ENCODE measurements at regions of chr2 and their contacts with region 1.

Region 1: DNA sequence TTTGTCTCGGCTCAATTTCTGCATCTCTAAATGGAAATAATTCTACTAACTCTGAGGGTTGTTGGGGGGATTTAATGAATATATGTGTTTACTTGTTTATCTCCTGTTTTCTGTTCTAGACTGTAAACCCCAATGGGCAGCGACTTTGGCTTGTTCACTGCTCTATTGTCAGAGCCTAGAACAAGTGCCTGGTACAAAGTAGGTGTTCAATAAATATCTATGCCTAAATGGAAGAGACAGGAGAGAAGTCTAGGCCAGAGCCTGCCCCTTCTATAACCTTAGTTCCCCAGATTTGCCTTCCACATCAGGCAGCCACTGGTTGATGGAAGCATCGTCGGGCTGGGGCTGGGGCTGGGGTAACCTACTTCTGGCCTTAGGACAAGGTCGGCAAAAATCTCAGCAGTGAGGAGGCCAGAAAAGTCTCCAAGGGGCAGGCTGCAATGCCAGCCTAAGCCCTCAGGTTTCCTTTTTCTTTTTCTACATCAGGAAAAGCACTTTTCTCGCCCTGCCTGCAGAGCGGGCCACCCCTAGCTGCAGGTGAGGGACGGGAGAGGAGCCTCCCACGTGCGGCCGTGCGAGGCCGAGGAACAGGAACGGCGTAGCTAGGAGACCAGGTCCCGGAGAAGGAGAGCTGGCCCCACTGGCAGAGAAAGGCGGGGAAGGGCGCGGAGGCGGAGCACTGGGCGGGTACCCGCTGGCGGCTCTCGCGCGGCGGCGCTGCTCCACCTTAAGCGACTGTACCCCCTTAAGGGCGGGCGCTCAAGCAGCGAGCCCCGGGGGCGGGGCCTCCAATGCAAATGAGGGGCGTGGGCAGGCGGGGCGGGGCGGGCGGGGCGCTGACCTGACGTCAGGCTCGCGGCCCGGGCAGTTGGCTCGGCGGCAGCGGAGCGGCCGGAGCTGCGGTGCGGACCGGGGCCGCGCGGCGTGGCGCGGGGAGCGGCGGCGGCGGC is at the start of gene CNNM4:
- DNase-seq: peak; percentile 82 to 95 (median 91)
- ATAC-seq: peak; percentile 96
- H3K4me3 ChIP-seq: peak within 1 kb of the TSS; percentile 83
- H3K4me3 Mint-ChIP-seq: peak within 1 kb of the TSS; percentile 85 to 96 (median 89)
- H3K27ac ChIP-seq: peak within 1 kb of the TSS; percentile 81
- H3K27ac Mint-ChIP-seq: peak within 1 kb of the TSS; percentile 80 to 94 (median 90)
- H3K4me1 ChIP-seq: peaks cover 46 to 53% of the 10 kb centered on the region in 2 donors
- H3K4me1 Mint-ChIP-seq: peaks cover 41 to 57% (median 49%) of the 10 kb centered on the region in 7 donors
- H3K27me3 ChIP-seq: no peaks in the 10 kb centered on the region
- H3K27me3 Mint-ChIP-seq: no peaks in the 10 kb centered on the region
- total RNA-seq, gene CNNM4: 4.6 to 9.5 (median 5.5) TPM

Region 2: GRCh38 chr2:96208143-96209010 is 551.9 kb before region 1 on chr2 and contains the start of gene STARD7:
- CTCF ChIA-PET with region 1: no interaction called
- POLR2A ChIA-PET with region 1: no interaction called
- intact Hi-C with region 1: loop called in 1 of 2 experiments (anchors 5 kb)
- DNase-seq: peak; percentile 93 to 97 (median 95)
- ATAC-seq: peak; percentile 92
- H3K4me3 ChIP-seq: peak within 1 kb of the TSS; percentile 83
- H3K4me3 Mint-ChIP-seq: peak within 1 kb of the TSS; percentile 88 to 100 (median 95)
- H3K27ac ChIP-seq: peak within 1 kb of the TSS; percentile 87
- H3K27ac Mint-ChIP-seq: peak within 1 kb of the TSS; percentile 86 to 99 (median 93)
- H3K4me1 ChIP-seq: peaks cover 30 to 37% of the 10 kb centered on the region in 2 donors
- H3K4me1 Mint-ChIP-seq: peaks cover 37 to 57% (median 51%) of the 10 kb centered on the region in 7 donors
- H3K27me3 ChIP-seq: no peaks in the 10 kb centered on the region
- H3K27me3 Mint-ChIP-seq: no peaks in the 10 kb centered on the region
- total RNA-seq, gene STARD7: 56.5 to 133 (median 74.2) TPM

Region 3: DNA sequence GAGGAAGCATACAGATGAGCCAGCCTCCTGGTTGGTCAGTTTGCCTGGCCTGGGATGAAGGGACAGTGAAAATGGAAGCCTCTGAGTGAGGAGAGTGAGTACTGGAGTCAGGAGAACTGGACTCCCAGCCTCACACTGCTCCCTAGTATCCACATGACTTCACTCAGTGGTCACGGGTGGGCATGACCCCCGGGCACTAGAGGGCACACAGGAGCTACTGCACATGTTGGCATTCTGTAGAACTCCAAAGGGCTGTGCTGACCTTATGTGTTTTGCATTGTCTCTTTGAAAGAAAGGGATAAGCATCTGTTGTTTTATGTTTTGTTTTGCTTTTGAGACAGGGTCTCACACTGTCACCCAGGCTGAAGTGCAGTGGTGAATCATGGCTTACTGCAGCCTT is 401.0 kb before region 1 on chr2:
- CTCF ChIA-PET with region 1: no interaction called
- POLR2A ChIA-PET with region 1: no interaction called
- intact Hi-C with region 1: loop called in 1 of 2 experiments (anchors 5 kb)
- DNase-seq: peak in 8 of 9 donors; percentile 26 to 64 (median 46)
- ATAC-seq: peak; percentile 83
- H3K4me3 ChIP-seq: no peak overlapping the region
- H3K4me3 Mint-ChIP-seq: no peak overlapping the region
- H3K27ac ChIP-seq: no peak overlapping the region
- H3K27ac Mint-ChIP-seq: peak overlapping the region in 2 of 9 donors; percentile 33 to 64
- H3K4me1 ChIP-seq: peaks cover 0 to 12% of the 10 kb centered on the region in 2 donors
- H3K4me1 Mint-ChIP-seq: peaks cover 0 to 10% (median 1%) of the 10 kb centered on the region in 7 donors
- H3K27me3 ChIP-seq: no peaks in the 10 kb centered on the region
- H3K27me3 Mint-ChIP-seq: no peaks in the 10 kb centered on the region

Region 4: DNA sequence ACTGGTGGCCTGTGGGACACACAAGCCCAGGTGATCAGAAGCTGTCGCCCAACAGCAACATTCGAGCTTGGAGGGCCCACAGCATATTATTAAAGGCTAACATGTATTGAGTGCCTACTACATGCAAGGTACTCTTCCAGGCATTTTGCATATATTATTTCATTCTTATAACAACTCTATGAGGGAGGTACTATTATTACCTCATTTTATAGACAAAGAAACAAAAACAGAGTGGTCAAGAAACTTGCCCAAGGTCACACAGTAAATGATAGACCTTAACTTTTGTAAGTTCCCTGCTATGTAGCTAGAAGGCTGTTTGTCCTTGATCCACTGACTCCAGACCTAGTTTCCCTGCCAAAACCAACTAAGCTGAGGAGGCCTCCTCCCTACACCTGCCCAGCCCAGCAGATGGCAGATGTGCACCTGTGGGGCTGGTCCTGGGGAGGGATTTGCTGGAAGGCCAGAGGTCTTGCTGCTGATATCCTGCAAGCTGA is 157.9 kb before region 1 on chr2:
- CTCF ChIA-PET with region 1: interaction called, 3 read pairs
- POLR2A ChIA-PET with region 1: interaction called, 3 read pairs
- intact Hi-C with region 1: loop called in 1 of 2 experiments (anchors 5 kb)
- DNase-seq: no peak
- ATAC-seq: peak; percentile 24
- H3K4me3 ChIP-seq: no peak overlapping the region
- H3K4me3 Mint-ChIP-seq: no peak overlapping the region
- H3K27ac ChIP-seq: no peak overlapping the region
- H3K27ac Mint-ChIP-seq: no peak overlapping the region
- H3K4me1 ChIP-seq: no peaks in the 10 kb centered on the region
- H3K4me1 Mint-ChIP-seq: peaks cover 0 to 32% (median 2%) of the 10 kb centered on the region in 7 donors
- H3K27me3 ChIP-seq: no peaks in the 10 kb centered on the region
- H3K27me3 Mint-ChIP-seq: no peaks in the 10 kb centered on the region

Region 5: GRCh38 chr2:96773922-96774321 is 13.6 kb after region 1 on chr2:
- CTCF ChIA-PET with region 1: interaction called, 40 read pairs
- POLR2A ChIA-PET with region 1: interaction called, 19 read pairs
- intact Hi-C with region 1: loop called in 1 of 2 experiments (anchors 1 kb)
- DNase-seq: peak in 8 of 9 donors; percentile 35 to 66 (median 54)
- ATAC-seq: peak; percentile 73
- H3K4me3 ChIP-seq: peak overlapping the region; percentile 62
- H3K4me3 Mint-ChIP-seq: peak overlapping the region; percentile 84 to 95 (median 93)
- H3K27ac ChIP-seq: peak overlapping the region; percentile 70
- H3K27ac Mint-ChIP-seq: peak overlapping the region; percentile 88 to 97 (median 93)
- H3K4me1 ChIP-seq: peaks cover 11 to 12% of the 10 kb centered on the region in 2 donors
- H3K4me1 Mint-ChIP-seq: peaks cover 9 to 30% (median 22%) of the 10 kb centered on the region in 7 donors
- H3K27me3 ChIP-seq: no peaks in the 10 kb centered on the region
- H3K27me3 Mint-ChIP-seq: no peaks in the 10 kb centered on the region

Region 6: DNA sequence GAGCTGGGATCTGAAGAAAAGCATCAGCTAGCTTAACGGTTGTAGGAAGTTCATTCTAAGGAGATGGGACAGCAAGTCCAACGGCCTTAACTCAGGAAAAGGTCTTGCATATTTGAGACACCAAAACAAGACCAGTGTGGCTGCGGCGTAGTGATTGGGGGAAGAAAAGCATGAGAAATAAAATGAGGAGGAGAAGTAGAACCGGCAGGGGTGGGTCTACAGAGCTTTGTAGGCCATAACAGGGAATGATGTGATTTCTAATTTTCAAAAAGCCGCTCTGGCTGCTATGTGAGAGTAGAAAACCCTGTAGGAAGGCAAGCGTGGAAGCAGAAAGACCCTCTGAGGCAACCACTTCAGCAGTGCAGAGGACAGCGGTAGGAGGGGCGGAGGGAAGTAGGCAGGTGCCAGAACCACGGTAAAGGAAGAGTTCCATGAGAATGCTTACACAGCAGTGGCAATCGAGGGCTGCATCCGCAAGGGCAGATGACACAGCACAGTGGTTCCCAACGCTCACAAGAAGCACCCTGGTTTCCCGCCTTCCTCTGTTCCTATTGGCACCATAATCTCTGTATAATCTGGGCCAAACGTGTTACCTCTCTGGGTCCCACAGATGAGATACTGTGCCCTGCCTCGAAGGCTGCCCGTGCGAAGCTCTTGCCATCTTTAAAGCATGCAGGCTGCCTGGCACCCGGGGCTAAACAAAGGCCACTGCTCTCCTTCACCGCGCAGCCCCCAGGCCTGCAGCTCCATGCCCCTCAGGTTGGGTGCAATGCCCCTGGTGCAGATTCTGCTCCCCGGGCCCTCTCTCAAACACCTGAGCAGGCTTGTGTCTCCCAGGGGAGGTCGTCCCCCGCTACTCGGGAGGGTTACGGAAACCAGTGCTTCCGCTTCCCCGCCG is 96.7 kb after region 1 on chr2:
- CTCF ChIA-PET with region 1: interaction called, 4 read pairs
- POLR2A ChIA-PET with region 1: interaction called, 3 read pairs
- intact Hi-C with region 1: loop called (anchors 1 to 5 kb)
- DNase-seq: peak in 5 of 9 donors; percentile 27 to 39 (median 35)
- ATAC-seq: no peak
- H3K4me3 ChIP-seq: peak overlapping the region; percentile 72
- H3K4me3 Mint-ChIP-seq: peak overlapping the region; percentile 85 to 93 (median 89)
- H3K27ac ChIP-seq: peak overlapping the region; percentile 79
- H3K27ac Mint-ChIP-seq: peak overlapping the region; percentile 38 to 92 (median 84)
- H3K4me1 ChIP-seq: peaks cover 14 to 16% of the 10 kb centered on the region in 2 donors
- H3K4me1 Mint-ChIP-seq: peaks cover 21 to 57% (median 43%) of the 10 kb centered on the region in 7 donors
- H3K27me3 ChIP-seq: no peaks in the 10 kb centered on the region
- H3K27me3 Mint-ChIP-seq: no peaks in the 10 kb centered on the region

Region 7: DNA sequence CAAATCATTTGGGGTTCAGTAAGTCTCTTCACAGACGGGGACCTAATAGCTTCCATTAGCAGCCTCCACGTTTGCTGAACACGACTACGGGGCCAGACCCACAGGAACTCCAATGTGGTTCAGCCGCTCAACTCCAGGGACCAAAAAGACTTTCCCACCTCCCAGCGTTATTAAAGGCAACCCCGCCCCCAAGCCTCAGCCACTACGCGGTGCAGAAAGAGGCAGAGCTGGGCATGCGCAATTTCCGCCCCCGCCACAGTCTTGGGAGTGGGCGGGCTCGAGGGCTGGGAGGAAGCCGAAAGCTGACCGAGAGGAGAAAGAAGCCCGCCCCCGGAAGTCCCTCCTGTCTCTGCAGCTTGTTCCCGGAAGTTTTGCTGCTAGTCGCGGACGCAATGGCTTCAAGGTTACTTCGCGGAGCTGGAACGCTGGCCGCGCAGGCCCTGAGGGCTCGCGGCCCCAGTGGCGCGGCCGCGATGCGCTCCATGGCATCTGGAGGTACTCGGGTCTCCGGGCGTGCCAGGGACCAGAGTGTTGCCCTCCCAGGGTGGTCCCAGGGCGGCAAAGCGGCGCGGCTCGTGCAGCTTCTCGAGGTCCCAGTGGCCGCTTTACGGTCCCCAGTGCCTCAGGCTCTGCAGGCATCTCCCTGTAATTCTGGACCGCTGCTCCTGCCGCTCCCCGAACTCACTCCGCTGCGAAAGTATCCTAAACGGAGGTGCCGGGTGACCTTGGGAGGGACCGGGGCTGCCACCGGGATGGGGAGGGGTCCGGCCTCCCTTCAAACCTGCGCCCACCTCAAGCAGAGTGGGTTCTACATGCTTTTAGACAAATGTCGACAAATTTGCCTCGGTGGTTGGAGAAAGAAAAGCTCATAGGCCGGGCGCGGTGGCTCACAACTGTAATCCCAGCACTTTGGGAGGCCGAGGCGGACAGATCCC is 885.7 kb after region 1 on chr2 and contains the start of gene COX5B:
- CTCF ChIA-PET with region 1: no interaction called
- POLR2A ChIA-PET with region 1: no interaction called
- intact Hi-C with region 1: loop called in 1 of 2 experiments (anchors 10 kb)
- DNase-seq: peak; percentile 91 to 99 (median 98)
- ATAC-seq: peak; percentile 99
- H3K4me3 ChIP-seq: peak within 1 kb of the TSS; percentile 99
- H3K4me3 Mint-ChIP-seq: peak within 1 kb of the TSS; percentile 86 to 97 (median 94)
- H3K27ac ChIP-seq: peak within 1 kb of the TSS; percentile 97
- H3K27ac Mint-ChIP-seq: peak within 1 kb of the TSS; percentile 91 to 99 (median 98)
- H3K4me1 ChIP-seq: peaks cover 15 to 17% of the 10 kb centered on the region in 2 donors
- H3K4me1 Mint-ChIP-seq: peaks cover 15 to 32% (median 26%) of the 10 kb centered on the region in 7 donors
- H3K27me3 ChIP-seq: no peaks in the 10 kb centered on the region
- H3K27me3 Mint-ChIP-seq: no peaks in the 10 kb centered on the region
- total RNA-seq, gene COX5B: 111 to 213 (median 122) TPM